ENCODE measurements at regions of chr6 and their contacts with region 1.

Region 1: DNA sequence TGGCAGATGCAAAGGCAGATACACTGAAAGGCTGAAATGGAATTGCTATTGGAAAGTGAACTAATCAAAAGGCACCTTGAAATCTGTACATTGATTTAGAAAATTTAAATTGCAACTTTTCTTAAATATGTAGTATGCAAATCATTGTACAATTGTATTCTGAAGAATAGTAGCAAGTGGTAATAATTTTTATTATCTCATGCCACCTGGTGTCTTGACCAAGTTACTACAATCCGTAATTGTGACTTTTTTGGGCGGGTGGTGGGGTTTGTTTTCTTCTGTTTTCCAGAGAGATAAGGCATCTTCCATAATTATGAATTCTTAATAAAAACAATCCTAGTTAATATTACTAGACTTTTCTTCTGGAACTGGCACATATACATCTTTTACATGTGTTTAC is 12.5 kb upstream of the BCKDHB start:
- DNase-seq: no peak

Region 2: GRCh38 chr6:78693835-78694234 is 1400.2 kb before region 1 on chr6:
- intact Hi-C with region 1: no loop called
- DNase-seq: no peak

Region 3: GRCh38 chr6:79777713-79778579 is 316.1 kb before region 1 on chr6:
- intact Hi-C with region 1: loop called (anchors 10 kb)
- DNase-seq: peak; percentile 89

Region 4: GRCh38 chr6:79949233-79949632 is 144.8 kb before region 1 on chr6:
- intact Hi-C with region 1: loop called (anchors 10 kb)
- DNase-seq: no peak

Region 5: DNA sequence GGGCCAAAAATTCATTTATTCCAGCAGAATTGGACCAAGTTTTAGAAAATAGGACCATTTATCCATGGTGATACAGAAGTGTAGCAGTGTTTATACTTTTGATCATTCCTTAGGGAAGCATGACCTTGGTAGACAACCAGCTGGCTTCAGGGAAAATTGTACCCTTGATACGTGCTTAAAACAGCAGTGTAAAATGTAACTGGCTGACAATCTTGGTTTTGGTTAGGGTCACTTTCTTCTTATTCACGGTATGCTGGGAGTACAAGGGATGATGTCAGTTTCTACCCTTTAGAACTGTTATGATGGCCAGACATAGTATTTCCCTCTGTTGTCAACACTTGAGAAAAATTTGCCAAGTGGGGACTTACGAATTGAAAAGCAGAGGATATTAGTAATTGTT is 169.6 kb after region 1 on chr6:
- intact Hi-C with region 1: no loop called
- DNase-seq: no peak